ENCODE measurements at regions of chr2 and their contacts with region 1.

Region 1: DNA sequence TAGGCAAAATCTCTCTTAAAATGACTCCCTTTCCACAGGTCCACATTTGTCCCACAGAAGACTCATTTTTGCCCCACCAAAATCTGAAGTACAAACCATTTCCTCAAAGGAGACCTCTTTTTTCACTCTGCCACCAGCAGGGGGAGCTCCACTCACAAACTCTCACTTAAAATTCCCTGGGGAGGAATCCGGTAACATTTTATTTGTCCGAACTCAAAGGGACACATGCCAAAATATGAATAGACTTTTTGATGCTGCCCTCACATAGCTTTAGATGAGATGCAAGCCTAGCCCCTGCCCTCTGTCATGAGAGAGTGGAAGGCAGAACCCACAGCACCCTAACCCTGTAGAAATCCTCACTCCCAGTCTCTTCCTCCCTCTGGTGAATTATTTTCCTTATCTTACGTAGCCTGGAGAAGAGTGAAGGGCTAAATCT is 57.1 kb downstream of the RMDN2 start:
- DNase-seq: peak; percentile 64 to 76
- H3K4me3 ChIP-seq: no peak overlapping the region
- H3K27ac ChIP-seq: no peak overlapping the region
- H3K4me1 ChIP-seq: peaks cover 0 to 4% (median 0%) of the 10 kb centered on the region in 4 donors
- H3K27me3 ChIP-seq: no peaks in the 10 kb centered on the region
- CTCF ChIP-seq: peak; percentile 74 to 88

Region 2: DNA sequence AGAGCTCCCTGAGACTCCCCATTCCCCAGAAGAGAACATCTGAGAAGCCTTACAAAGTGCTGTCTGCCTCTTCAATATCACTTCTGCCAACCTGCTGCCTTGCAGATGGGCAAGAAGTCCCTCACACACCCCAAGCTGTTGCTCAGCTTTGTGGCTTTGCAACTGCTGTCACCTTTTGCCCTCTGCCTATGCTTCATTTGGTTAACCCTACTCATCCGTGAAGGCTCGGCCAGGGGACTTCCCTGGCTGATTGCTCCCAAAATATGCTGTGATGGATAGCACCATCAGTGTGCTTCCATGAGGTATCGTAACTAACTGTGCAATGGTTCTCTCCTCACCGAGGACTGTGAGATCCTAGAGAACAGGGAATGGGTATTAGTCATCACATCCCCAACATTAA is 182.7 kb after region 1 on chr2:
- intact Hi-C with region 1: no loop called
- DNase-seq: no peak
- H3K4me3 ChIP-seq: no peak overlapping the region
- H3K27ac ChIP-seq: no peak overlapping the region
- H3K4me1 ChIP-seq: peaks cover 0 to 9% (median 4%) of the 10 kb centered on the region in 4 donors
- H3K27me3 ChIP-seq: no peaks in the 10 kb centered on the region
- CTCF ChIP-seq: no peak

Region 3: DNA sequence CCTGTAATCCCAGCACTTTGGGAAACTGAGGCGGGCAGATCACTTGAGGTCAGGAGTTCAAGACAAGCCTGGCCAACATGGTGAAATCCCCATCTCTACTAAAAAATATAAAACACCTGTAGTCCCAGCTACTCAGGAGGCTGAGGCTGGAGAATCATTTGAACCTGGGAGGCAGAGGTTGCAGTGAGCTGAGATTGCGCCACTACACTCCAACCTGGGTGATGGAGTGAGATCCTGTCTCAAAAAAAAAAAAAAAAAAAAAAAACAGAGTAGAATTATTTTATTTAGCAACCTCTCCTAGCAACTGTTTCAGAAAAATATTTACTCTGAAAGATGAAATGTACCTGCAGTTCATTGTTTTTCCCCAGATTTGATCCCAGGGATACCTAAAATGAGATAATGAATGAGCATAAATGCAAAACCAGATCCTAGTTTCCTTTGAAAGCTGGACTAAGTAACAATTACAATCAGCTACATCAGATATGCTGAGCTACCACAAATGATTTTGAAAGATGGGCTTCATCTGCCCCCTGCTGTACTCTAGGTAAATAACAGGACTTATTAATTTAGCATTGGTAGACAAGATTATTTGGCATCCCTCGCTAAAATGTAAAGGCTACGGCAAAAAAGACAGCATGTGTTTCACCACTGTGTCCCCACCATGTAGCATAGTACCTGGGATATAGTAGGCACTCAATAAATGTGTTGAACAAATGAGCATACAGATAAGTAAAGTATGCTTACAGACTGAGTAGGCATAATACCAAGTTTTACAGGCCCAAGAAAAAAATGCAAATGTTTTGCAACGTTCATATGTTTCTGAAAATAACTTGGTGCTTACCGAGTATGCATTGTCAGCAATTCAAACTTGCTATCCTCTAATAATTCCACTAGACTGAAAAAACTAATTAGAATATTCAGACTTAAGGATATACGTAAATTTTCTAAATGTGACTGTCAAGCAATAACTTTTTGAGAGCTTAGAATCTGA is 292.4 kb after region 1 on chr2:
- intact Hi-C with region 1: loop called (anchors 5 kb)
- DNase-seq: no peak
- H3K4me3 ChIP-seq: no peak overlapping the region
- H3K27ac ChIP-seq: no peak overlapping the region
- H3K4me1 ChIP-seq: no peaks in the 10 kb centered on the region
- H3K27me3 ChIP-seq: no peaks in the 10 kb centered on the region
- CTCF ChIP-seq: peak; percentile 59 to 95

Measured in tibial artery (tissue), 4 donors.